Activated naive CD4-positive, alpha-beta T cell treated with anti-CD3 and anti-CD28 coated beads, Interleukin-2, amount 10 ng/mL, durations not matched to agents 7 days and 5 days (primary cell): ENCODE measurements at regions of chr5 and their contacts with region 1.

Region 1: GRCh38 chr5:174793684-174794328 is 69.4 kb downstream of the MSX2 start:
- DNase-seq: peak; percentile 62
- H3K4me3 Mint-ChIP-seq: no peak overlapping the region
- H3K27ac Mint-ChIP-seq: no peak overlapping the region
- H3K4me1 Mint-ChIP-seq: peaks cover 6% of the 10 kb centered on the region
- H3K27me3 Mint-ChIP-seq: peaks cover 25% of the 10 kb centered on the region

Region 2: GRCh38 chr5:174418928-174419796 is 374.6 kb before region 1 on chr5:
- CTCF ChIA-PET with region 1: interaction called, 49 read pairs
- DNase-seq: peak; percentile 86
- H3K4me3 Mint-ChIP-seq: peak overlapping the region; percentile 8
- H3K27ac Mint-ChIP-seq: no peak overlapping the region
- H3K4me1 Mint-ChIP-seq: peaks cover 11% of the 10 kb centered on the region
- H3K27me3 Mint-ChIP-seq: peaks cover 16% of the 10 kb centered on the region

Region 3: GRCh38 chr5:175015028-175015685 is 221.4 kb after region 1 on chr5:
- CTCF ChIA-PET with region 1: no interaction called
- DNase-seq: no peak
- H3K4me3 Mint-ChIP-seq: no peak overlapping the region
- H3K27ac Mint-ChIP-seq: no peak overlapping the region
- H3K4me1 Mint-ChIP-seq: peaks cover 14% of the 10 kb centered on the region
- H3K27me3 Mint-ChIP-seq: no peaks in the 10 kb centered on the region